Panc1 (cell line): ENCODE measurements at regions of chr16 and their contacts with region 1.

Region 1: DNA sequence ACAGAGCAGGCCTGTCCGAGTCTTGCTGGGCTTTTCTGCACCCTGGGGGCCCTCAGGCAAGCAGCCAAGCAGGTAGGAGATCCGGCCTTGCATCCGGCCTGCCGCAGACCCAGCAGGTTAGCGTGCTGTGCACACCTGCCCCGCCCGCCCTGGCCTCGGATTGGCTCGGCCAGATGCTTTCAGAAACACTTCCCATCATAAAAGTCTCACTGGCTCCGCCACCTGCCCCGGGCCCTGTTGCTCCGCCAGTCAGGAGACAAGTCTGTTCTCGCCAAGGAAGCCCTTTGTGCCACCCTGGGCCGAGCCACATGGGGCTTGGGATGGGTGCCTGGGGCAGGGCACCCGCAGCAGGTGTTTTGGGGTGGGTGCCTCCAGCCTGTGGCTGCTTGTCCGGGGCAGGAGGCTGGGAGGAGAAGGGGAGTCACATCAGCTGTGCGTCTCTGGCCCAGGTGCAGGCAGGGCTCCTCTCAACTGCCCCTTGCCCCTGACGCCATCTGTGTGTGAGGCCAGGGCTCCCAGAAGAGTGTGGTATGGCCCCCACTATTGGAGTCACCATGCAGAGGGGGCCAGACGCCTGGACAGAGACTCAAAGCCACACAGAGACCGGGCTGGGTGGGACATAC is 228.2 kb upstream of the GSE1 start:
- DNase-seq: no peak
- ATAC-seq: 0 out of 2 replicates have a peak, but pooled peaks have one; percentile 9
- H3K4me3 ChIP-seq: no peak overlapping the region
- H3K27ac ChIP-seq: no peak overlapping the region
- H3K4me1 ChIP-seq: peaks cover 7% of the 10 kb centered on the region; the same call in 1 of the 2 replicates
- H3K27me3 ChIP-seq: no peaks in the 10 kb centered on the region
- CTCF ChIP-seq: no peak

Region 2: GRCh38 chr16:85132456-85133289 is 252.3 kb before region 1 on chr16:
- CTCF ChIA-PET with region 1: interaction called, 12 read pairs
- POLR2A ChIA-PET with region 1: no interaction called
- in situ Hi-C with region 1: no loop called
- intact Hi-C with region 1: no loop called
- DNase-seq: no peak
- ATAC-seq: no peak
- H3K4me3 ChIP-seq: no peak overlapping the region
- H3K27ac ChIP-seq: no peak overlapping the region
- H3K4me1 ChIP-seq: peaks cover 3% of the 10 kb centered on the region; the same call in 1 of the 2 replicates
- H3K27me3 ChIP-seq: no peaks in the 10 kb centered on the region
- CTCF ChIP-seq: no peak

Region 3: GRCh38 chr16:85303357-85303901 is 81.5 kb before region 1 on chr16:
- CTCF ChIA-PET with region 1: no interaction called
- POLR2A ChIA-PET with region 1: no interaction called
- in situ Hi-C with region 1: no loop called
- intact Hi-C with region 1: no loop called
- DNase-seq: peak; percentile 22
- ATAC-seq: peak; percentile 78
- H3K4me3 ChIP-seq: peak overlapping the region; percentile 11 to 38; a peak in 2 of 4 replicates
- H3K27ac ChIP-seq: peak overlapping the region; percentile 68; the same call in 1 of the 2 replicates
- H3K4me1 ChIP-seq: peaks cover 58% of the 10 kb centered on the region
- H3K27me3 ChIP-seq: no peaks in the 10 kb centered on the region
- CTCF ChIP-seq: peak; percentile 96